A673 (cell line): ENCODE measurements at regions of chr4 and their contacts with region 1.

Region 1: GRCh38 chr4:38319456-38320342 is 344.3 kb upstream of the KLF3 start:
- DNase-seq: peak; percentile 94
- H3K4me3 ChIP-seq: peak overlapping the region; percentile 24
- H3K27ac ChIP-seq: peak overlapping the region; percentile 75
- H3K4me1 ChIP-seq: peaks cover 38% of the 10 kb centered on the region
- H3K27me3 ChIP-seq: no peaks in the 10 kb centered on the region
- CTCF ChIP-seq: peak; percentile 97

Region 2: GRCh38 chr4:38179690-38180377 is 139.9 kb before region 1 on chr4:
- CTCF ChIA-PET with region 1: interaction called, 4 read pairs
- POLR2A ChIA-PET with region 1: no interaction called
- intact Hi-C with region 1: loop called (anchors 5 kb)
- DNase-seq: peak; percentile 77
- H3K4me3 ChIP-seq: no peak overlapping the region
- H3K27ac ChIP-seq: no peak overlapping the region
- H3K4me1 ChIP-seq: no peaks in the 10 kb centered on the region
- H3K27me3 ChIP-seq: no peaks in the 10 kb centered on the region
- CTCF ChIP-seq: peak; percentile 90

Region 3: DNA sequence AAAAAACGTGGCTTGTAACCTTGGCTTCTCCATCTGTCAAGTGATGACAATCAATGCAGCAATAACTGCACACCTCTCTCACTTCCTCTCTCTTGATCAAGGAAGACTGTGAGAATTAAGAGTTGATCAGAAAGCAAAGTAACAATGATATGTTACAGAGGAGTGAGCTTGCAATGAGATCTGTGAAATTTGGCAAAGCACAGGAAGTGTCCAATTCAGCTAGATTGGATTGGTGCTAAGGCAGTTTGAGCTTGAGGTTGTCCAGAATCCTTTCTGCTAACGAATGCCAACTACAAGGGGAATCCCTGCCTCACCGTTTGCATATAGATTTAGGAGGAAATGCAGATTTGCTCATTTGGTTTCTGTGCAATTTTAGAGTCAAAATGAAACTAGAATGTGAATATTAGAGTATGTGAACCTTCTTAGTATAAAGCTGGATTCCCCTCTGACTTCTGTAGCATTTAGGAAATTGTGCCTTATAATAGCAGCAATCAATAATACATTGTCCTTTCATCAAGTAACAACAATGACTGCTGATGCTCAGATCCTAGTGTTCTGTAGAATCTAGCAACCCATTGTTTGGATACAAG is 13.1 kb before region 1 on chr4:
- CTCF ChIA-PET with region 1: no interaction called
- POLR2A ChIA-PET with region 1: interaction called, 15 read pairs
- intact Hi-C with region 1: no loop called
- DNase-seq: no peak
- H3K4me3 ChIP-seq: no peak overlapping the region
- H3K27ac ChIP-seq: no peak overlapping the region
- H3K4me1 ChIP-seq: no peaks in the 10 kb centered on the region
- H3K27me3 ChIP-seq: no peaks in the 10 kb centered on the region
- CTCF ChIP-seq: no peak

Region 4: DNA sequence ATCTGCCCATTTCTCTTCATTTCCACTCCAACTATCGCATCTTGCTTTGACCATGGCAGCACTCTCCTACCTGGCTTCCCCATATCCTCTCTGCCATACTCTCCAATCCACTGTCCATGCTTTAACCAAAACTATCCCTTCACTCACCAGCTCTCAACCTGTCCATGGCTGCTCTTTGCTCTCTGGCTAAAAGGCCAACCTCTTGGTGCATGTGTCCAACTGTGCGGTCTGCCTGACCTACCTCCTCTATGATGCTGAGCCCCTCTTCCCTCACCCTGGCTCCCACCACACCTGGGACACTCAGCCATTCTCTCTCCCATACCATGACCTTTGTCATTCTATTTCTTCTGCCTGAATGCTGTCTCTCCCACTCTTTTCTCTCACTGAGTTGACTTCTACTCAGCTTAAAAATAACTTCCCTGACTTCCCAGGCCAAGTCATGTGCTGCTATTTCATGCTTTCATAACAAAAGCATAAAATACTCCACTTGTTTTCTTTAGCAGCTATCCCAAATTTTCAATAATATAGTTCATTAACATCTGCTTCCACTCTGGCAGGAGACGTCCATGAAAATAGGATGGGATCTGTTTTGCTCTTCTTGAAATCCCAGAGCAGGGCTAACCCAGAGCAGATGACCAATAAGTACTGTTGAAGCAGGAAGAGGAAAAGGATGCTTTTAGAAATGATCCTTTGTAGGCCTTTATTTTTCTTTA is 314.5 kb after region 1 on chr4:
- CTCF ChIA-PET with region 1: no interaction called
- POLR2A ChIA-PET with region 1: interaction called, 14 read pairs
- intact Hi-C with region 1: no loop called
- DNase-seq: no peak
- H3K4me3 ChIP-seq: no peak overlapping the region
- H3K27ac ChIP-seq: no peak overlapping the region
- H3K4me1 ChIP-seq: no peaks in the 10 kb centered on the region
- H3K27me3 ChIP-seq: no peaks in the 10 kb centered on the region
- CTCF ChIP-seq: no peak

Region 5: DNA sequence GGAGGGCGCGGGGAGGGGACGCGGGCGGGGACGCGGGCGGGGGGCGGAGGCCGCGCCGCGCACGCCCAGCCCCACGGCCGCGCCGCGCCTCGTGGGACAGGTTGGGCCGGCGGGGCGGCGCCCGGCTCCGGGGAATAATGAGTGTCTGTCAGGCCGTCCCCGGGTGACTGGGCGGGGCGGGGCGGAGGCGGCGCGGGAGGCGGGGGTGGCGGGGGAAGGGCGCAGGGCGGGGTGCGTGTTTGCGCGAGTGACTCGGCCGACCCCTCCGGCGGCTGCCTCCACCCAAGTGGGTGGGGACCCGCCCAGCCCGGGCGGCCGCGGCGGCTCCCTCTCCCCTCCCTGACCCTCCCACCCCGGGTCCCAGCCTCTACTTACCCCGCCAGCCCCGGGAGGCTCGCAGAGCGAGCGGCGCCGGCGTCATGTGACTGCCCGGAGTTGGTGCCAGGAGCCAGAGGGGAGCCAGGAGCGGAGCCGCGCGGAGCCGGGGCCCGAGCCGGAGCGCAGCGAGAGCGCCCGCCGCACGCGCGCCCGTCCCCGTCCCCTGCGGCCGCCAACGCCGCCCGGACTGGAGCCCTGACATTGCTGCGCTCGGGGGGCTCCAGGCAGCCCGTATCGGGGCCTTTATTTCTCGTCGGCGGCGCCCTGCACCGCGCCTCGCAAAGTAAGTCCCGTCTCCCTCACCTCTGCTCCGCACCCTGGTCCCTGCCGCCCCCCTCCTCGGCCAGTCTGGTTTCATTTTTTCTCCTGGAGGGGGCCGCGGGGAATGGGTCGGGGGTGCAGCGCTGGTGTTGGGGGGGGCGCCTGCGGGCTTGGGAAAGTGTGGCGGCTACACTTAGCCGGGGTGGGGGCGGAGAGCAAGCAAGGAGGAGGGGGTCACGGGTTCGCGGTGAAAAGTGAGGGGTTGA is 344.4 kb after region 1 on chr4 and contains the start of gene KLF3:
- CTCF ChIA-PET with region 1: interaction called, 3 read pairs
- POLR2A ChIA-PET with region 1: interaction called, 4 read pairs
- intact Hi-C with region 1: loop called (anchors 2 kb)
- DNase-seq: peak; percentile 86
- H3K4me3 ChIP-seq: peak within 1 kb of the TSS; percentile 96
- H3K27ac ChIP-seq: peak within 1 kb of the TSS; percentile 98
- H3K4me1 ChIP-seq: peaks cover 26% of the 10 kb centered on the region
- H3K27me3 ChIP-seq: no peaks in the 10 kb centered on the region
- CTCF ChIP-seq: no peak
- total RNA-seq, gene KLF3: 36.1 and 38.4 TPM in 2 replicates

Region 6: DNA sequence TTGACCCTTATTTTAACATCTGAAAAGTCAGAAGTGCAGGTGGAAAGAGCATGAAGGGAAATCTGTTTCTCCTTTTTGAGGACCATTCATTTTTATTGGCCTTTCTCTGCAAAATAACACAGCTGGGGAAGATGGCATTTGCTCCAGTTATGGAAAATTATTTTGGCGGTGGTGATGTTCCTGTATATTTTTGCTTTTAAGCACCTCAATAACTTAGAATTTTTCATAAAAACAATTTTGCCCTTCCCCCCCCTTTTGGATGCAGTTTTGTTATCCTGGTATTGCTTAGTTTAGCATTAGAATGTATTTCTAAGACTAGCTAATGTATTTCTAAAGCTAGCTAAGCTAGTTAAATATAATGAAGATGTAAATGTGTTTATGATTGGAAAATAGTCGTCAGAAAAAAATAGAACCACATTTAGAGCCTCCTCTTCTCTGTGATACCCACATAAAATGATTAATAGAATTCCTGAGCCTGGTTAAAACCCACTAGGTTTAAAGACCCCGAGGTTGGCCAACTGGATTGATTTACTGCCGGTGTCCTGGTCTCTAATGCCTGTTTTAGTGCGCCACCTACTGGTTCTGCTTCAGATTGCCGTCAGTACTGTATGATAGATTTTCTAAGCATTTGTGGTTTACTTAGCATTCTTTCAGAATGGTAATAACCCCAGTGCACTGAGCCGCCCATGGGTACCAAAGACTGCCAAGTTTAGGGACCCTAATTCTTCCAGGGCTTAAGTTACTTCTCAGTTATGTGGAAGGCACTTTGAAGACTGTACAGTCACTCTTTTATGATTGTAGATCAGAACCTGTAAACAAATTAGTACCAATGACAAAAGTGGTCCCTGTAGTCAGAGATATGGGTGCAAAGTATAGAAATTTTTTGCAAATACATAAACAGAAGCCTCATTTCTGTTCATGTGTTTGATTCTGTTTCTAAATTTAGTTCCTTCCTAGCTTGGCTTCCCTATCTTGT is 355.7 kb after region 1 on chr4:
- CTCF ChIA-PET with region 1: interaction called, 22 read pairs
- POLR2A ChIA-PET with region 1: interaction called, 3 read pairs
- intact Hi-C with region 1: loop called (anchors 1 kb)
- DNase-seq: peak; percentile 89
- H3K4me3 ChIP-seq: no peak overlapping the region
- H3K27ac ChIP-seq: peak overlapping the region; percentile 98
- H3K4me1 ChIP-seq: peaks cover 75% of the 10 kb centered on the region
- H3K27me3 ChIP-seq: no peaks in the 10 kb centered on the region
- CTCF ChIP-seq: peak; percentile 96

Region 7: DNA sequence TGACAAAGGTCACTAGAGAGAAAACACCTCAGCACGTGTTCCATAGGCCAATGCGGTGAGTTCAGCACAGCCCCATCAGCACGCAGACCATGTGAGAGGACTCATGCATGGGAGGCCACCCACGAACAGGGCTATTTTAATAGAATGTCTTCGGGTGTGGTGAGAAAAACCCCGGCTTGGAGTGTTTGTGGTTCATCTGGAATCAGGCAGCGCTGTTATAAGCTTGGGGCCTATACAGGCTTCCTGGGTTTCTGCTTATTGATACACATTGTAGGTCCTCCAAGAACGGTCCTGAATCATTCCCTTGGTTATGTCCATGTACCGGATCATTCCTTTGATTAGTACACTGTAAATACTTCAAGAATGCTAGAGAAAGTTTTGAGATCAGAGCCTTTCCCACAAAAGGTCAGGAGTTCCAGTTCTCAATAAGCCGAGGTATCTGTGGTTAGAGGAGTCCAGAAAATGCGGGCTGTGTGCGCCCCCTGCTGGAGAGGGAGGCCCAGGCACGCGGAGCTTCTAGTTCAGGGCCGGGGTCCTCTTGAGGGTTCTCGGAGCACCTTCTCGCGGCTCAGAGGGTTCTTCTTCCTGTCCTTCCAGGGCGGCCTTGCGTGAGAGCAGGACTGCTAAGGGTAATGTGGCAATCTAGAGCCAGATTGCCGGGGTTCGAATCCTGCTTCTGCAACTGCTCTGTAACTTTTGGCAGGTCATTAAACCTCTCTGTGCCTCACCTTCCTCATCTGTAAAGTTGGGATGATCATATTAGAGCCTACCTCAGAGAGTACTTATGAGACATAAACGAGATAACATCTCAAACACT is 411.3 kb after region 1 on chr4:
- CTCF ChIA-PET with region 1: no interaction called
- POLR2A ChIA-PET with region 1: no interaction called
- intact Hi-C with region 1: loop called (anchors 1 kb)
- DNase-seq: peak; percentile 84
- H3K4me3 ChIP-seq: no peak overlapping the region
- H3K27ac ChIP-seq: no peak overlapping the region
- H3K4me1 ChIP-seq: no peaks in the 10 kb centered on the region
- H3K27me3 ChIP-seq: no peaks in the 10 kb centered on the region
- CTCF ChIP-seq: peak; percentile 98

Region 8: DNA sequence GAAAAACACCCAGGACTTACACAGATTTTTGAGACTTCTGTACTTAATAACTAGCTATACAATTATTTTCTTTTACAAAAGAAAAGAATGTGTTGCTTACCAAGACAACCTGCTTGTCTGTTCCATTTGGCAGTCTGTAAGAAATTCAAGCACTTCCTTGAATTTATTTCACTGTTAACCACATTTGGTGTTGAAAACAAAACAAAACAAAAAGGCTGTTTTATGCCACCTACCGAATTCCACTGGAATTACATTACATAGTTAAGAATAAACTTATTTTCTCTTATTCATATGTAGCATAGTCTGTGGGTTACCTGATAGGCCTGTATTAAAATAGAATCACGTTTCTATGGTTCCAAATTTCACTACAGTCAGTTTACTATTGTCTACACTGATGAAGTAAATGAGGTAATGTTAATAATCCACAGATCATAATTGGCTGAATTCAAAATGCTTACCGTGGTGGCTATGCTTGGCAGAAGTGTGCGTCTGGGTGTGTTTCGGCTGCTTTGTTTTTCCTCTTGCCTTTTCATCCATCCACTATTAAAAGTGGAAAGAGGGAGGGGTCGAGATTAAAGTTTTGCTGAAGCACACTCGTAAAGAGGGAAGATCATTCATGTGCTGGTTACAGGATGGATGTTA is 485.1 kb after region 1 on chr4 and contains the start of gene TLR1:
- CTCF ChIA-PET with region 1: no interaction called
- POLR2A ChIA-PET with region 1: no interaction called
- intact Hi-C with region 1: no loop called
- DNase-seq: peak; percentile 46
- H3K4me3 ChIP-seq: no peak within 1 kb of the TSS
- H3K27ac ChIP-seq: no peak within 1 kb of the TSS
- H3K4me1 ChIP-seq: no peaks in the 10 kb centered on the region
- H3K27me3 ChIP-seq: no peaks in the 10 kb centered on the region
- CTCF ChIP-seq: peak; percentile 64
- total RNA-seq, gene TLR1: 0.15 and 0.37 TPM in 2 replicates